Left ventricle myocardium inferior (tissue), 1 donor: ENCODE measurements at regions of chr6 and their contacts with region 1.

Region 1: DNA sequence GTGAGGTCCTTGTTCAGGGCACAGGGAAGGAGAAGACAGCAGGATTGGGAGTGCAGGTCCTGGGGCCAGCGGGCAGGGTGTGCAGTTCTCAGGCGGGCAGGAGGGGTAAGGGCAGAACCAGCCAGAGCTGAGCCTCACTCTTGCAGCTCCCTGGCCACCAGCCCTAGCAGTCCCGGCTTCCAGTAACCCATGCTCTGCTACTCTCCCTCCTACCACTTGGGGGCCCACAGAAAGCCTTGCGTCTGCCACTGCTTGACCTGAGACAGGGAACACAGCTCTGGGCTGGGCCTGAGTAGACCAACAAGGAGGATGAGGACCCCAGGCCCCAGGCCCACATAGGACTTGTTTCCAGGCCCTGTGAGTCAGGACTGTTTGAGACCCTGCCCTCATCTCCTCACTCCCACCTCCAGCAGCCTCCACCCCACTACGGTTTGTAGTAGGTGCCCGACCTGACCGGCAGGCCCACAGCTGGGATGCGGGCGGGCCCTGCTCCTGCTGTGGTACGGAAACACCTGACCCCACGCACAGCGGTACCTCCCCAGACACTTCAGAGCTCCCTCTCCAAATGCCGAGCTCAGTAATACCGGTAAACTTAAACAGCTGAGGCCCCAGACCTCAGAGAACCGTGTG is 39.2 kb downstream of the KCNK5 start:
- DNase-seq: peak; percentile 25
- H3K4me3 ChIP-seq: no peak overlapping the region
- H3K27ac ChIP-seq: no peak overlapping the region
- H3K4me1 ChIP-seq: no peaks in the 10 kb centered on the region
- H3K27me3 ChIP-seq: peaks cover 15% of the 10 kb centered on the region
- CTCF ChIP-seq: peak; percentile 58

Region 2: DNA sequence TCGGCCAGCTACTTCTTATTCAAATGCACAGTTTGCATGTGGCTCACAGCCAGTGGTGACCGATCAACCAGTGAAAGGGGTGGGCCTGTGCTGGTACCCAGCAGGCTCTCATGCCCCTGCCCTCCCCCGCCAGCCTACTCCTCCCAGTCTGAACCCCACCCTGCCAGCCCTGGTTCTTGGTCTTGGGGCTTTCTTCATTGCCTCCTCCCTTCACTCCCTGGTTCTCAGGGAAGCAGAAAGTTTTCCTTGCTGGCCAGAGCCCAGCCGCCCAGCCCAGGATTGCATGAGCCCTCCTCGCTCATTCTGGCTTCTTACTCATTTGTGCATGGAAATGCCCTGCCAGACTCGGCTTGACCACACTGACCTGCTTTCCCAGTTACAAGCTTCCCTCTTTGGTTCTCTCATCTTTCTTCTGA is 83.4 kb after region 1 on chr6:
- intact Hi-C with region 1: loop called (anchors 10 kb)
- DNase-seq: no peak
- H3K4me3 ChIP-seq: no peak overlapping the region
- H3K27ac ChIP-seq: no peak overlapping the region
- H3K4me1 ChIP-seq: no peaks in the 10 kb centered on the region
- H3K27me3 ChIP-seq: peaks cover 5% of the 10 kb centered on the region
- CTCF ChIP-seq: no peak